Activated T-helper 1 cell treated with anti-CD3 and anti-CD28 coated beads, Interleukin-12 subunit alpha, Interleukin-12 subunit beta, Interleukin-2, Interleukin-4 antibody, amounts not matched to agents 30 ng/mL and 10 ng/mL and 1 ng/mL, durations not matched to agents 14 hours and 24 hours and 36 hours (primary cell): ENCODE measurements at regions of chr6 and their contacts with region 1.

Region 1: DNA sequence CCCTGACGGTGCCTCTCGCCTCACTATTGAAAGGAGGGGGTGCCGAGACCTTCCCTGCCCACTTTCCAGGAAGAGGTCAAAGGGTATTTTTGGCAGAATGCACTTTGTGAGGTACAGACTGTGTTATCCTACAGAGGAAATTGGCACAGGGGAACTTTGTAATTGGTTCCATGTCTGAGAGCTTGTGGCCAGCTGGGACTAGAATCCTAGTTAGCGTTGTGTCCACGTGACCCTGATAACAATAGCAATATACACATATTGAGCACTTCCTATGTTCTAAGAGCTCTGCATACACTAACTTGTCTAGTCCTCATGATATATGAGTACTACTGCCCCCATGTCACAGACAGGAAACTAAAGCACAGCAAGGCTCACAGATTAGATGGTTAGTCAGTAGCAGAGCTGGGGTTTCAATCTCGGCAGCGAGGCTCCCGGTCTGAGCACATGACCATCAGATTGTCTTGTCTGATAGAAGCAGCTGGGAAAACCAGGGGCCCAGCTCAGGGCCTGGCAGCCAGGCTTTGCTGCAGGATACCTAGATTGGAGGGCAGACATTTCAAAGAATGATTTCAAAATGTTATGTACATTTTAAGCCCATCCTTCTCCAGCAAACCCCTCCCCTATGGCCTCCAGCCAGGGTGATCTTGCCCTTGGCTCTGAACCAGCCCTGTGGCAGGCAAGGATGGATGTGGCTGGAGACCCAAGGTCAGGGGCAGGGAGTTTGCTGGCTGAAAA is 1.4 kb downstream of the MAPK13 start:
- DNase-seq: peak; percentile 37
- H3K4me3 Mint-ChIP-seq: peak overlapping the region; percentile 85
- H3K27ac Mint-ChIP-seq: peak overlapping the region; percentile 92
- H3K4me1 Mint-ChIP-seq: peaks cover 50% of the 10 kb centered on the region
- H3K27me3 Mint-ChIP-seq: no peaks in the 10 kb centered on the region

Region 2: GRCh38 chr6:35461244-35461643 is 670.4 kb before region 1 on chr6:
- intact Hi-C with region 1: no loop called
- DNase-seq: no peak
- H3K4me3 Mint-ChIP-seq: no peak overlapping the region
- H3K27ac Mint-ChIP-seq: no peak overlapping the region
- H3K4me1 Mint-ChIP-seq: no peaks in the 10 kb centered on the region
- H3K27me3 Mint-ChIP-seq: no peaks in the 10 kb centered on the region

Region 3: GRCh38 chr6:36094753-36095496 is 36.8 kb before region 1 on chr6:
- intact Hi-C with region 1: loop called (anchors 2 kb)
- DNase-seq: peak; percentile 67
- H3K4me3 Mint-ChIP-seq: no peak overlapping the region
- H3K27ac Mint-ChIP-seq: peak overlapping the region; percentile 47
- H3K4me1 Mint-ChIP-seq: peaks cover 30% of the 10 kb centered on the region
- H3K27me3 Mint-ChIP-seq: no peaks in the 10 kb centered on the region

Region 4: DNA sequence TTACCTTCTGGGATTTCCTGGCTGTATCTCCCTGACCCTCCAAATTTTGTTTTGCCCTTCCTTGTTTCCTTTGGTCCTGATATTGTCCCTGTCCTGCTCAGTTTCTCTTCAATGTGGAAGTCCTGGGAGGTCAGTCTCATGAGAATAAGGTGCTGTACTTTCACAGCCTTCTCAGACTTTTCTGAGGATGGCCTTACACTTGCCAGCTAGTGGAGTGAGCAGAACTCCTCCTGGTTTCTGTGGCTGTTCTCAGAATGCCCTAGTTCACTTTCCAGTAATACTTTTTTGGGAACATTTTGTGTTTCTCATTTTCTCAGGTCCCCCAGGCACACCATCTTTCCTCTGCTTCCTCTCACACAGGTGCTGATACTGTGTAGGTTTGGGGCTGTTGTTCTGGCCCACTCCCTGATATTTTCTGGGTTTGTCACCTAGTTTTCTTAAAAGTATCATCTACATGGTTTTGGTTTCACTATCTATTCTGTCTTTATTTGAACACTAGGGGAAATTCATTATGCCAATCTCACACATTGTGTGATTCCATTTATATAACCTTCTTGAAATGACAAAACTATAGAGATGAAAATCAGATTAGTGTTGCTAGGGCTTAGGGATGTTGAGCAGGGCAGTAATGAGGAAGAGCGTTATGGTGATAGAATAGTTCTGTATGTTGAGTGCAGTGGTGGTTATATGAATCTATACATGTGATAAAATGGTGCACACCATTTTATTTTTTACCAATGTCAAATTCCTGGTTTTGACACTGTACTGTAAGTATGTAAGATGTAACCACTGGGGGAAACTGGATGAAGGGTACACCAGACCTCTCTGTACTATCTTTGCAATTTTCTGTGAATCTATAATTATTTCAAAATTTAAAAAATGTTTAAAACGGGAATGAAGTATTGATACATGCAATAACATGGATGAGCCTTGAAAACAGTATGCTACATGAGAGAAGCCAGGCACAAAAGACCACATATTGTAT is 37.6 kb after region 1 on chr6:
- intact Hi-C with region 1: loop called (anchors 1 kb)
- DNase-seq: no peak
- H3K4me3 Mint-ChIP-seq: peak overlapping the region; percentile 20
- H3K27ac Mint-ChIP-seq: peak overlapping the region; percentile 64
- H3K4me1 Mint-ChIP-seq: peaks cover 27% of the 10 kb centered on the region
- H3K27me3 Mint-ChIP-seq: peaks cover 2% of the 10 kb centered on the region

Region 5: DNA sequence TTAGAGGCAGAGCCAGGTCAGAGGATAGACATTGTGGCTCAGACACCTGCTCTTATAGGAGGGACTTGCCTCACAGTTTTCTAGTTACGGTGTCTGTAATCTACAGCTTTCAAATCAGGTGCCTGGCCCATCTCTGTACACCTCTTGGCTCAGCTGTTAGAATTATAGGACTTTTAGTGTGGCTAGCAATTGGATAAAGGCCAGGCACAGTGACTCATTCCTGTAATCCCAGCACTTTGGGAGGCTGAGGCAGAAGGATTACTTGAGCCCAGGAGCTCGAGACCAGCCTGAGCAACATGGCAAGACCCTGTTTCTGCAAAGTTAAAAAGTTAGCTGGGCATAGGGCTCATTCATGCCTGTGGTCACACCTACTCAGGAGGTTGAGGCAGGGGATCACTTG is 84.9 kb after region 1 on chr6:
- intact Hi-C with region 1: no loop called
- DNase-seq: no peak
- H3K4me3 Mint-ChIP-seq: no peak overlapping the region
- H3K27ac Mint-ChIP-seq: no peak overlapping the region
- H3K4me1 Mint-ChIP-seq: no peaks in the 10 kb centered on the region
- H3K27me3 Mint-ChIP-seq: no peaks in the 10 kb centered on the region

Region 6: GRCh38 chr6:36249536-36249935 is 117.9 kb after region 1 on chr6:
- intact Hi-C with region 1: no loop called
- DNase-seq: no peak
- H3K4me3 Mint-ChIP-seq: no peak overlapping the region
- H3K27ac Mint-ChIP-seq: no peak overlapping the region
- H3K4me1 Mint-ChIP-seq: no peaks in the 10 kb centered on the region
- H3K27me3 Mint-ChIP-seq: peaks cover 12% of the 10 kb centered on the region